Right cardiac atrium (tissue), 5 donors: ENCODE measurements at regions of chr20 and their contacts with region 1.

Region 1: DNA sequence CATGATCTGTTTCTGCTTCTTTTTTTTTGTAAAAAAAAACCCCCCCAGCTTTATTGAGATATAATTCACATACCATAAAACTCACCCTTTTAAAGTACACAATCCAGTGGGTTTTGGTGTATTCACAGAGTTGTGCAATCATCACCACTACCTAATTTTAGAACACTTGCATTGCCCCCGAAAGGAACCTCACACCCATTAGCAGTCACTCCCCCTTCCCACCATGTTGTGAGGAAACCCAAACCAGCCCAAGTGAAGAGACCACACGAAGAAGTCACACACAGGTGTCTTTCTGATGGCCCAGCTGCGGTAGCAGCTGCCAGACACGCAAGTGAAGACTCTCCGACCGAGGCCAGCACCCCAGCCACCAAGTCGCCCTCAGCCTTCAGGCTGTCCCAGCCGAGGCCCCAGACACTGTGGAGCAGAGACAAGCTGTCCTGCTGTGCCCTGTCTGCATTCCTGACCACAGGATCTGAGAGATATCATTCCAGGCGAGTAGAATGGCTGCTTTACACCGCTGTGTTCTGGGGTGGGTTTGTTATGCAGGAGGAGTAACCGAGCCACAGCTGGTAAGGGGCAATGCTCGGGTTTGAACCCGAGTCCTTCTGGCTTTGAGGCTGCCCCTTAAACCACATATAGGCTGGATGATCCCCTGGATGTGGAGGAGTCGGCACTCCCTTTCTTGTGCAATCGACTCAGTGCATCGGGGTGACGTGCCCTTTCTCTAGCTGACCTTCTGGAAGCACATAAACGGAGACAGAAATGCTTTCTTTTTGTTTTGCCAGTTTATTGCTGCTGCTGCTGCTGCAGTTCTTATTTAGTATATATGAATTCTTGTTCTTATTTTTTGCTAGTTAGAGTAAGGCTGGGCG is 59.1 kb upstream of the PTPN1 start:
- DNase-seq: peak; percentile 52 to 75 (median 72)
- ATAC-seq: peak; percentile 45 to 55
- H3K4me3 ChIP-seq: peak overlapping the region; percentile 12
- H3K27ac ChIP-seq: peak overlapping the region; percentile 49
- H3K4me1 ChIP-seq: peaks cover 3% of the 10 kb centered on the region
- H3K27me3 ChIP-seq: no peaks in the 10 kb centered on the region

Region 2: DNA sequence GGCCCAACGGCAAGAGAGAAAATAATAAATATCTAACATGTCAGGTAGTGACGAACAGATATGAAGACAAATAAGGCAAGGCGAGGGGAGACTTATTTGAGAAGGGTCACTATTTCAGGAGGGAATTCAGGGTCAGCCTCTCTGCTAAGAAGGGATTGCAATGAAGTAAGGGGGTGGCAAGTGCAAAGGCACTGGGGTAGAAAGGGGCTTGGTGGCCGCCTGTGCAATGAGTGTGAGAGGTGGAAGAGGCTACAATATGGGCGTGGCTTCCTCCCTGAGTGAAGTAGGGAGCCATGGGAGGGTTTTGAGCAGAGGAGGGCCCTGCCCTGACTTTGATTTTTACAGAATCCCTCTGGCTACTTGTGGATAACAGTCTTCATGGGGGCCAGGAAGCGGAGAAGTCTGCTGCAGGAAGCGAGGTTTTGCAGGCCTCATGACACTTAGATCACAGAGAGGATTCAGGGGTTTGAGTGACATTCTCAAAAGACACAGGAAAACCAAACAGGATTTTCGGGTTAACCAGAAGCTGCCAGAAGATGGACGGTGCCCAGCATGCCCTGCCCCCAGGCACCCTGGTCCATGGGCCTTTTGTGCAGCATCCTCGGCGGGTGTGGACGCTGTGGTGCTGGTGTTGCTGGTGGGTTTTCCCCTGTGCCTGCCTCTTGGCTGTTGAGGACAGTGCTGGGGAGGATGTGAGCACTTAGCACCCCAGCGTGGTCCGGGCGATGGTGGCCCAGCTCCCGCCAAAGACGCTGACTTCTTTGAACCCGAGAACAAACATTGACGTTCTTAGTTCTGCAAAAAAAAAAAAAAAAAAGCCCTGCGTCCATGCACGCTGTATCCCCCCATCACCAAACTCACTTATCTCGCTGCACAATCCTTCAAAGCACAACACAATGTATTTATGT is 65.1 kb before region 1 on chr20:
- intact Hi-C with region 1: loop called in 1 of 4 experiments (anchors 5 kb)
- DNase-seq: no peak
- ATAC-seq: no peak
- H3K4me3 ChIP-seq: no peak overlapping the region
- H3K27ac ChIP-seq: no peak overlapping the region
- H3K4me1 ChIP-seq: peaks cover 9% of the 10 kb centered on the region
- H3K27me3 ChIP-seq: no peaks in the 10 kb centered on the region

Region 3: GRCh38 chr20:50395258-50395729 is 55.8 kb before region 1 on chr20:
- intact Hi-C with region 1: loop called in 1 of 4 experiments (anchors 10 kb)
- DNase-seq: peak; percentile 83 to 93 (median 90)
- ATAC-seq: peak; percentile 86 to 89
- H3K4me3 ChIP-seq: no peak overlapping the region
- H3K27ac ChIP-seq: peak overlapping the region; percentile 94
- H3K4me1 ChIP-seq: peaks cover 16% of the 10 kb centered on the region
- H3K27me3 ChIP-seq: no peaks in the 10 kb centered on the region

Region 4: GRCh38 chr20:50415516-50416113 is 35.5 kb before region 1 on chr20:
- intact Hi-C with region 1: loop called in 1 of 4 experiments (anchors 5 kb)
- DNase-seq: peak; percentile 100
- ATAC-seq: peak; percentile 97 to 98
- H3K4me3 ChIP-seq: no peak overlapping the region
- H3K27ac ChIP-seq: peak overlapping the region; percentile 100
- H3K4me1 ChIP-seq: peaks cover 17% of the 10 kb centered on the region
- H3K27me3 ChIP-seq: no peaks in the 10 kb centered on the region